ENCODE measurements at regions of chr17 and their contacts with region 1.

Region 1: DNA sequence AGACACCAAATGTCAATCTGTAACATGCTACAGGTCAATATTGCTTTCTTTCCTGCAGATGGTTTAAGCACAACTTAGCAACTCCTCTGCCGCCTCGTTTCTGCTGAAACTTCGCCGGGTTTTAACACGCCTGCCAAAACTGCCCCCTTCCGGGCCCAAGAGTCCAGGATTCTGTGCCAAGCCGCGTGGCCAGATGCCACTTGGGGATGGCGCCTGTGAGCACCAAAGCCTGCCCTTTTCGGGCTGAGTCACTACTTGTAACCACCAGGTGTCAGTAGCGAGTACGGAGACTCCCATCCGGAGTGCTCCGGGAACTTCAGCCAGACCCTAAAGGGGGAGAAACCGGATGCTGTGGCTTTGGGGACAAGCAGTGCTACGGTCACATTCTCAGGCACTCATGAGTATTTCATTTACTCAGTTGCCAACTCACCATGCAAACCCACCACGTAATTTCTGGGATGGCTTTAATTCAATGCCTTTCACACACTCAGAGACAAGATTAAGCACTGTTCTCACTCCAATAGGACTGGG is 7.8 kb downstream of the PMP22 start:
- DNase-seq: peak; percentile 79
- H3K4me3 Mint-ChIP-seq: no peak overlapping the region
- H3K27ac Mint-ChIP-seq: no peak overlapping the region
- H3K4me1 Mint-ChIP-seq: peaks cover 14% of the 10 kb centered on the region
- H3K27me3 Mint-ChIP-seq: peaks cover 56% of the 10 kb centered on the region

Region 2: GRCh38 chr17:15502369-15503112 is 245.2 kb after region 1 on chr17:
- CTCF ChIA-PET with region 1: interaction called, 56 read pairs
- intact Hi-C with region 1: loop called (anchors 1 kb)
- DNase-seq: peak; percentile 88
- H3K4me3 Mint-ChIP-seq: no peak overlapping the region
- H3K27ac Mint-ChIP-seq: no peak overlapping the region
- H3K4me1 Mint-ChIP-seq: peaks cover 8% of the 10 kb centered on the region
- H3K27me3 Mint-ChIP-seq: no peaks in the 10 kb centered on the region

Region 3: DNA sequence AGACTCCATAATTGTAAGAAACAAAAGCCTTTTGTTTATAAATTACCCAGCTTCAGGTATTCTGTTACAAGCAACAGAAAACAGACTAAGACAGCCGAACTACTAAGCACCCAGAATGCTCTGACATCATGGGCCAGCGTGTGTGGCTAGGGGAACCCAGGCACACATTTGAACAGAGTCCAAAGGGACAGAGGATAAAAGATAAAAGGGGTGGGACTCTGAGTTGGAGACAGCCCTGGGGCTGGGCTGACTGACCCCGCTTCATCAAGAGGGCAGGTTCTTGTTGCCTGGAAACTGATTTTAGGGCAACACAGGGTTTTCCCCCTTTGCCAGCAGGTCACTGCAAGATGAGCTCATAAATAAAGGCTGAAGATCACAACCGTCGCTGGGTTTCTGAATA is 1342.2 kb after region 1 on chr17:
- CTCF ChIA-PET with region 1: no interaction called
- intact Hi-C with region 1: loop called (anchors 5 kb)
- DNase-seq: no peak
- H3K4me3 Mint-ChIP-seq: no peak overlapping the region
- H3K27ac Mint-ChIP-seq: no peak overlapping the region
- H3K4me1 Mint-ChIP-seq: no peaks in the 10 kb centered on the region
- H3K27me3 Mint-ChIP-seq: no peaks in the 10 kb centered on the region

Measured in activated naive CD4-positive, alpha-beta T cell treated with anti-CD3 and anti-CD28 coated beads for 36 hours (primary cell).